HEK293 (cell line): ENCODE measurements at regions of chr15 and their contacts with region 1.

Region 1: DNA sequence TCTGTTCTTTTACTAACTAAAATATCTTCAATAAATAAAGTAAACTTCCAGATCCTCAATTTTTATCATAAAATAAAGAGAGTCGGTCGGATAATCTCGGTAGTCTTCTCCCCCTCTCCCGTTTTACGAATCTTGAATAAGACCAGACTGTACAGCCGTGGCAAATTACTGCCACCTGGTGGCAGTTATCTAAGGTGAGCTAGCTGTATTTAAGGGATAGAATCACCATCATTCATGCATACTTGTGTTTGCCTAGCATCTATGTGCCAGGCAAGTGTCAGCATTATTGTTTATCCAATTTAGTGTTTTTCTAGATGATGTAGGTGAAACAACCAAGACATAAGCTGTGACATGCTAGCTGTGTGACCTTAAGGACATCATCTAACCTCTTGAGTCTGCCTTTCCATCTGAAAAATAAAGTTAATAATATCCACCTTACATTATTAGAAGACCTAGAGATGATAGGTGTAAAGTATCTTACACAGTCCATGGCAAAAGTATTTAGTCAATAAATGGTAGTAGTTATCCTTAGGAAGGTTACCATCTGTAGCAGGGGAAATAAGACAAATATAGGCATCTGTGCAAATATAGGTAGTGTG is 21.3 kb downstream of the DUT start:
- H3K4me3 ChIP-seq: no peak overlapping the region
- H3K27ac ChIP-seq: no peak overlapping the region
- H3K4me1 ChIP-seq: no peaks in the 10 kb centered on the region
- CTCF ChIP-seq: peak; percentile 49

Region 2: DNA sequence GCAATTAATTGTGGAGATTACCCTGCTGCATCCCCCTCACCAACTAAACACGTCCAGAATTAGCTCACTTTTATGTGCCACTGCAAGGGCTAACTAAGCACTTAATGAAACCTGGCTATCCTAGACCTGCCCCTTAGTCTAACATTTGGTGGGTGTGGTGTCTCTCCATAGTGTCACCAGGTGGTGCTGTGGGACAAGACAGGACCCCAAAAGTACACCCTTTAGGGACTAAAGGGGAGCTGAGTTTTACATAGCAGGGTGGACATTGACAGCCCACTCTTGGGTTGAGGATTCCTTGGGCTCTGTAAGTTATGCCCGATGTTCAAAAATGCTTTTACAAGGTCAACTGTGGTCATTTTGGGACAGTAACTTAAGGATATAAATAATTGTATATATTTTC is 15.6 kb before region 1 on chr15:
- CTCF ChIA-PET with region 1: interaction called, 11 read pairs
- POLR2A ChIA-PET with region 1: no interaction called
- H3K4me3 ChIP-seq: no peak overlapping the region
- H3K27ac ChIP-seq: no peak overlapping the region
- H3K4me1 ChIP-seq: no peaks in the 10 kb centered on the region; the same call in 1 of the 2 replicates
- CTCF ChIP-seq: no peak

Region 3: GRCh38 chr15:48363474-48363873 is 10.9 kb after region 1 on chr15:
- CTCF ChIA-PET with region 1: no interaction called
- POLR2A ChIA-PET with region 1: no interaction called
- H3K4me3 ChIP-seq: no peak overlapping the region
- H3K27ac ChIP-seq: no peak overlapping the region
- H3K4me1 ChIP-seq: peaks cover 4% of the 10 kb centered on the region
- CTCF ChIP-seq: no peak